Endothelial cell of umbilical vein (primary cell): ENCODE measurements at regions of chr16 and their contacts with region 1.

Region 1: DNA sequence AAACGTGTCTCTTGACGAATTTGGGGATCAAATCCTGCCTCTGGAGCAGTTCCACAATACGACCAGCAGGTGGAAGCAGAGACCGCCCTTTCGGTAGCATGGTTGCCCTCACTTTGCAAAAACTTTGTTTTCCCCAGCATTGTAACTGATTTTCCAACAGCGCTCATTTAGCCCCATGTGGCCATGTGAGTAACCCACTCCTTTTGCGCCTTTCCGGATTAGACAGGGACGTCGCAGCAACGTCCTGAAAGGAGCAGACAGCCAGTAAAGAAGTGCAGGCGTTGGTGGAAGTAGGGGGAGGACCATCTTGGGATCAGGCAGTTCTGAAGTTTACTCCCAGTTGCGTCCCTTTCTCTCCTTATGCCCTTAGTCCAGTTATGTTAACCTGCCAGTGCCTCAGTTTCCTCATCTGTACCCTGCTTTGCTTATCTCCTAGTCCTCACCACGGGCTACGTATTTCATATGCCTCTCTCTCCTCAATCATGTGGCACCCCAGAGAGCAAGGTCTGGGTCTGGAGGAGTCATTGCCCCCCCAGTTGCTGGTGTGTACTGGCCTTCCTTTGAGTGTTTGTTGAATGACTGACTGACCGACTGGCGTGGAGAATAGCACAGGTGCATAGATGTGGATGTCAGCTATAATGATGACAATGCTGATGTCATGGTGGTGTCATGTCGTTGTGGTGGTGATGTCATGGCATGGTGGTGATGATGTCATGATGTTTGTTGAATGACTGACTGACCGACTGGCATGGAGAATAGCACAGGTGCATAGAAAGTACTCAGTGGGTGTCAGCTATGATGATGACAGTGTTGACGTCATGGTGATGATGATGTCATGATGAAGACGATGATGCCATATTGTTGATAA is 22.3 kb downstream of the TMEM114 start:
- DNase-seq: peak; percentile 85
- H3K4me3 ChIP-seq: no peak overlapping the region
- H3K27ac ChIP-seq: no peak overlapping the region
- H3K4me1 ChIP-seq: no peaks in the 10 kb centered on the region
- H3K27me3 ChIP-seq: peaks cover 2 to 3% of the 10 kb centered on the region in 2 experiments
- CTCF ChIP-seq: peak; percentile 87 to 97
- POLR2A ChIP-seq: no peak

Region 2: GRCh38 chr16:8458481-8459046 is 109.4 kb before region 1 on chr16:
- CTCF ChIA-PET with region 1: no interaction called
- POLR2A ChIA-PET with region 1: no interaction called
- dilution Hi-C with region 1: no loop called
- intact Hi-C with region 1: no loop called
- DNase-seq: no peak
- H3K4me3 ChIP-seq: no peak overlapping the region
- H3K27ac ChIP-seq: no peak overlapping the region
- H3K4me1 ChIP-seq: no peaks in the 10 kb centered on the region
- H3K27me3 ChIP-seq: no peaks in the 10 kb centered on the region
- CTCF ChIP-seq: no peak
- POLR2A ChIP-seq: no peak

Region 3: GRCh38 chr16:8621572-8622314 is 53.8 kb after region 1 on chr16 and contains the start of gene METTL22:
- CTCF ChIA-PET with region 1: no interaction called
- POLR2A ChIA-PET with region 1: no interaction called
- dilution Hi-C with region 1: no loop called
- intact Hi-C with region 1: loop called (anchors 1 kb)
- DNase-seq: peak; percentile 87
- H3K4me3 ChIP-seq: peak within 1 kb of the TSS; percentile 77 to 96 (median 94)
- H3K27ac ChIP-seq: peak within 1 kb of the TSS; percentile 64
- H3K4me1 ChIP-seq: peaks cover 8% of the 10 kb centered on the region
- H3K27me3 ChIP-seq: peaks cover 0 to 9% of the 10 kb centered on the region in 2 experiments
- CTCF ChIP-seq: no peak
- POLR2A ChIP-seq: peak; percentile 88
- total RNA-seq, gene METTL22: 40.3 and 42.0 TPM in 2 replicates

Region 4: DNA sequence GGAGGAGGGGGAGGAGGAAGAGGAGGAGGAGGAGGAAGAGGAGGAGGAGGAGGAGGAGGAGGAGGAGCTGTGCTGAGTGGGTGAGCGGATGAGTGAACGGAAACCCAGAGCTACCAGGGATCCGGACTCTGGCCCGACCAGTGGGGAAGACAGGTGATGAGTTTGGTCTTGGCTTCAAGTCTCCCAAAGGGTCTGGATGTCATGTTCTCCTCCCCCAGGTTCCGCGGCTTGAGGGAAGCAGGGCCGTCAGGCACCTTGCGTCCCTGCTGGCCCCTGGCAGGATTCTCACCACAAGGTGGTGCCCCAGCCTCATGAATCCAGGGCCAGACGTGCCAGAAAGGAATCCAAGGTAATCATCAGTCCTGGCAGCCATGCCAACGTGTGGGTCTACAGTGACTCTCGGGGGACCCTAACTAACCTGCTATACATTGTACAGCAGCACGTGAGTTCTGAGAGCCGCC is 92.9 kb after region 1 on chr16:
- CTCF ChIA-PET with region 1: interaction called, 9 read pairs
- POLR2A ChIA-PET with region 1: no interaction called
- dilution Hi-C with region 1: no loop called
- intact Hi-C with region 1: loop called (anchors 1 kb)
- DNase-seq: peak; percentile 53
- H3K4me3 ChIP-seq: no peak overlapping the region
- H3K27ac ChIP-seq: no peak overlapping the region
- H3K4me1 ChIP-seq: no peaks in the 10 kb centered on the region
- H3K27me3 ChIP-seq: peaks cover 0 to 6% of the 10 kb centered on the region in 2 experiments
- CTCF ChIP-seq: peak; percentile 65 to 75
- POLR2A ChIP-seq: no peak

Region 5: DNA sequence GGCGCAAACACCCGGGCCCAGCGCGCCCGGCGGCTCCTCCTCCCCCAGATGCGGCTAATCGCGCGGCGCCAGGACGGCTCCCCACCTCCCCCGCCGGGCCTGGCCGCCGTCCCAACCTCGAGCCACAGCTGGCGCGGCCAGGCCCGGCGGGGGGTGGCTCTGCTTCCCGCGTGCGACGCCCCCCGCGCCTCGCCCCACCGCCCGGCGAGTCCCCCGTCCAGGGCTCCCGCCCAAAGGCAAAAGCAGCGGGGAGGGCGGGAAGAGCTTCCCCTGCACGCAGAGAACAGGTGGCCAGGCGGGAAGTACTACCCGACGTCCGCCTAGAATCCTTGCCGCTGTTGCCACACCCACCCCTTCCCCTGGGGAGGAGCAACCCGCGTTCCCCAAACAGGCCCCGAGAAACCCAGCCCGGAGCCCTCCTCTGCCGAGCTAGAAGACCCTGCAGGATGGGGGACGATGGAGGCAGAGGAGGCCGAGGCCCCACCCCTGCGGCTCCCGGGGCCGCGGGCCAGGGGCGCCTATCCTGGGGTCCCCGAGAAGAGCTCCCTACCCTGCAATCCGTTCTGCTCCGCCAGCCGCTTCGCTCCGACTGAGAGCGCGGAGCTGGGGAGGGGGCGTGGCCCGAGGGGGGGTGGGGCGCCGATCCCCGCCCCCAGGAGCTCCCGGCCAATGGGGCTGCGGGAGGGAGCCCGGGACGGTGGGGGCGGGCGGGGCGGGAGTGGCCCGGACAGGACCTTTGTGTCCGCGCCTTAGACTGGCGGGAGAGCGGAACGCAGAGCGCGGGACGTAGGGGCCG is 300.6 kb after region 1 on chr16 and contains the start of gene CARHSP1:
- CTCF ChIA-PET with region 1: no interaction called
- POLR2A ChIA-PET with region 1: no interaction called
- dilution Hi-C with region 1: no loop called
- intact Hi-C with region 1: loop called (anchors 5 kb)
- DNase-seq: peak; percentile 92
- H3K4me3 ChIP-seq: peak within 1 kb of the TSS; percentile 60 to 80 (median 75)
- H3K27ac ChIP-seq: peak within 1 kb of the TSS; percentile 64
- H3K4me1 ChIP-seq: peaks cover 20% of the 10 kb centered on the region
- H3K27me3 ChIP-seq: no peaks in the 10 kb centered on the region
- CTCF ChIP-seq: no peak
- POLR2A ChIP-seq: peak; percentile 72
- total RNA-seq, gene CARHSP1: 69.2 and 72.5 TPM in 2 replicates

Region 6: DNA sequence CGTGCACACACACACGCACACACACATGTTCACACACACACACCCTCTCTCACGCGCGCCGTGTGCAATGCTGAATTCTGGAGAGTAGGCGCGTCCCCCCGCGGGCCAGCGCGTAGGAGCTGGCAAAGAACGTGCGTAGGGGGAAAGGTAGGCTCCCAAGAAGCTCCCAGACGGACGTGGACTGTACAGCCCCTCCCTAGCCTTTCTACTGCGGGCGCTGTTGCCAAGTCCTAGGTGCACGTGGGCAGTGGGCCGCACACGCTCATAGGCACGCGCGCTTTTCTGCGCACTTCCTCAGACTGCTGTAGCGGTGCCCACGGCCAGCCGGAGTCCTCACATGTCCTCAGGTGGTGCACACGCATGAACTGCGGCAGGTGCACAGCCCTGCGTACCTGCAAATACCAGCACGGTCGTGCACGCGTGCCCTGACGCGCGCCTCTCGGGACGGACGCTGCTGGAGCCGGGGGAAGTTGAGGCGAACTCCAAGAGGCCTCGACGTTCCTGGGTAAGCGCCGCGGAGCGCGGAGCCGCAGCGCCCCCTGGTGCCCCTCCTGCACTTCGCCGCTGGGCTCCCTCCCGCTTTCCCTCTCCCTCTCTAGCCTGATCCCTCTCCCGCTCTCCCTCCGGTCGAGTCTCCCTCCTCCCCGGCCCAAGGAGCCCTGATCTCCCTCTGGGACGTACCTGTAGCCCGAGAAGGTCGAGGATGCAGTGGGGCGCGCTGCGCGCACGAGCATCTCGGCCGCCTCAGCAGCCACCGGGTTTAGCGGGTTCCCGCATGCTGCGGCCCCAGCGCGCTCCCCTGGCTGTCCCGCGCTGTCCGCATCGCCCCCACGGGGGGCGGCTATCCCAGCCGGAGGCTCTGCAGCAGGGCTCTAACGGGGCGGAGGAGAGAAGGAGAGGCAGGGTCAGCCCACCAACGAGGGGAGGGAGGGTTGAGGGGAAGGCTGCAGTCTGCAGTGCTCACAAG is 1613.5 kb after region 1 on chr16:
- CTCF ChIA-PET with region 1: interaction called, 4 read pairs
- POLR2A ChIA-PET with region 1: no interaction called
- dilution Hi-C with region 1: no loop called
- intact Hi-C with region 1: loop called (anchors 5 kb)
- DNase-seq: peak; percentile 35
- H3K4me3 ChIP-seq: no peak overlapping the region
- H3K27ac ChIP-seq: no peak overlapping the region
- H3K4me1 ChIP-seq: no peaks in the 10 kb centered on the region
- H3K27me3 ChIP-seq: peaks cover 10 to 14% of the 10 kb centered on the region in 2 experiments
- CTCF ChIP-seq: peak; percentile 71 to 94
- POLR2A ChIP-seq: no peak